ENCODE measurements at regions of chr17 and their contacts with region 1.

Region 1: GRCh38 chr17:40622509-40622928 is 25.1 kb downstream of the SMARCE1 start:
- DNase-seq: no peak
- H3K4me3 ChIP-seq: no peak overlapping the region
- H3K4me3 Mint-ChIP-seq: no peak overlapping the region
- H3K27ac Mint-ChIP-seq: no peak overlapping the region
- H3K4me1 ChIP-seq: peaks cover 14% of the 10 kb centered on the region
- H3K4me1 Mint-ChIP-seq: peaks cover 6% of the 10 kb centered on the region
- H3K27me3 ChIP-seq: no peaks in the 10 kb centered on the region
- H3K27me3 Mint-ChIP-seq: no peaks in the 10 kb centered on the region
- CTCF ChIP-seq: no peak

Region 2: DNA sequence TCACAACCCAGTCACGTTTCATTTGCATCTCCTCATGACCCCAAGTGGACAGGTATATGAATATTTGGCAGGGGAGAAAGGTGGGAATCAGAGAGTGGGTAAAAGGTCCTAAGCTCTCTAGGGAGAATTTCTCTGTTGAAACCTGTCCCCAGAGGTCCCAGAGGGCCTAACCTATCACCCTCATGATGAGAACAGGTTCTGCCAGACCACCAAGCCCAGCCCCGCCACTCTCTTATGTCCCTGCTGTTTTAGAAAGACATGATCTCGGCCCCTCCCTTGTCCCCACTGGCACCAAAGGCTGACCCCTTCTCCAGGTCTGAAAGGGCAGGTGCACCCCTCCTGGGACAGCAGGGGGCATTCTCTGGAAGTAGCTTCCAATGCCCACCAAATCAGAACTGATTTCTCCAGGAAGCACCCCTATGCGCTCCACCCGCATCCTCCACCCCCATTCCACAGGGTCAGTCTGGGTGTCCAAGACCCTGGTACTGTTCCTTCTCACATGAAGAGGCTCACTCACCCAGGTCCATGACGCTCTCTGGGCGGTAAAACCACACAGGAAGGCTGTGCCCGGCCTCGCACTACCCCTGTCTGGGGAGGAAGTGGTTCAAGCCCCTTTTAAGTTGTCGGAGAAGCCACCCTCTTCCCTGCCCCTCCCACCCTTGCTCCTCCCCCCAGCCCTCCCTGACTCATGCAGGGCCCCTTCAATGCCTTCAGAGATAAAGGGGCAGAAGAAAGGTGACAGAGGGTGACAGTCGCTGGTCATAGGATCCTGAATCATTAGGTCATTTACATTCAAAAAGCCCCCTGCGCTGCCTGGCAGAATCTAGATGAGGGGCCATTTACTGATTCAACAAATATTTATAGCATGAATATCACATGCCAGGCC is 57.4 kb before region 1 on chr17 and contains the start of gene CCR7:
- CTCF ChIA-PET with region 1: no interaction called
- POLR2A ChIA-PET with region 1: no interaction called
- intact Hi-C with region 1: no loop called
- DNase-seq: no peak
- H3K4me3 ChIP-seq: no peak within 1 kb of the TSS
- H3K4me3 Mint-ChIP-seq: no peak within 1 kb of the TSS
- H3K27ac Mint-ChIP-seq: no peak within 1 kb of the TSS
- H3K4me1 ChIP-seq: peaks cover 5% of the 10 kb centered on the region; the same call in 1 of the 2 replicates
- H3K4me1 Mint-ChIP-seq: peaks cover 6% of the 10 kb centered on the region
- H3K27me3 ChIP-seq: no peaks in the 10 kb centered on the region; the same call in 1 of the 2 replicates
- H3K27me3 Mint-ChIP-seq: peaks cover 9% of the 10 kb centered on the region
- CTCF ChIP-seq: no peak
- total RNA-seq, gene CCR7: not detected in 2 replicates

Region 3: GRCh38 chr17:40726919-40727318 is 104.4 kb after region 1 on chr17:
- CTCF ChIA-PET with region 1: interaction called, 10 read pairs
- POLR2A ChIA-PET with region 1: no interaction called
- intact Hi-C with region 1: loop called (anchors 1 kb)
- DNase-seq: peak in 1 of 2 experiments; percentile 29
- H3K4me3 ChIP-seq: no peak overlapping the region
- H3K4me3 Mint-ChIP-seq: no peak overlapping the region
- H3K27ac Mint-ChIP-seq: no peak overlapping the region
- H3K4me1 ChIP-seq: no peaks in the 10 kb centered on the region
- H3K4me1 Mint-ChIP-seq: no peaks in the 10 kb centered on the region
- H3K27me3 ChIP-seq: no peaks in the 10 kb centered on the region; the same call in 1 of the 2 replicates
- H3K27me3 Mint-ChIP-seq: peaks cover 10% of the 10 kb centered on the region
- CTCF ChIP-seq: peak; percentile 41 to 76